ENCODE measurements at regions of chr17 and their contacts with region 1.

Region 1: DNA sequence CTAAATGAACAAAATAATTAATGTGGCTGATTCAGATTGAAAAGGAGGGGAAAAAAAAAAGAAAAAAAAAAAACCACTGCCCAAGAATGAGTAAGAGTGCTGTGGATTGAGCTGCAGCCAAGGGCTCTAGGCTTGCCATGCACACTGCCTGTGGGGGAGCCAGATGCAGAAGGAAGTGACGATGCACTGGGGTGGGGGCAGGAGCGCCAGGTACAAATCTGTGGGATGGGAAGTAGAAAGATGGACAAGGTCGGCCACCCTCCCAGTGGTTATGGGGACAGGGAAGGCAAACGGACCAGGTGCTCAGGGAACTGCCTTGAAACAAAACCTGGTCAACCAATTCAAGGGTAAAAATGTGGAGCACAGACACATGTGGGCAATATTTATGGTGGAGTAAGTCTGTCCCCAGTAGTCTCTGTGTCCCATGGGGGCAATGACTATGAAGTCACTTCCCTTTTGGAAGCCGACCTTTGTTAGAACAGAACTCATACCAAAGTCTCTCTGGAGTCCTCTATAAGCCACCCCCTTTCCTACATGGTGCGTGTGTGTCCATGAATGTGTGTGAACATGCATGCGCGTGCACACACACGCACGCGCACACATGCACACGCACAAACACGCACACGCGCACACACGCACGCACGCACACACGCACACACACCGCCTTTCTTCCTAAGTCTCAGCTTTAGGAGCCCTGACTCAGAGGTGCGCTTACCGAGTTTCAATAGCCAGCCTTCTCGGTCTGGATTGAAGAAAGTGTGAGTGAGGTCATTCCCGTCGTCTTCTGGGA is 84.3 kb downstream of the CYTH1 start:
- DNase-seq: no peak
- H3K4me3 ChIP-seq: no peak overlapping the region
- H3K27ac ChIP-seq: no peak overlapping the region
- H3K4me1 ChIP-seq: no peaks in the 10 kb centered on the region
- H3K27me3 ChIP-seq: no peaks in the 10 kb centered on the region
- CTCF ChIP-seq: no peak

Region 2: DNA sequence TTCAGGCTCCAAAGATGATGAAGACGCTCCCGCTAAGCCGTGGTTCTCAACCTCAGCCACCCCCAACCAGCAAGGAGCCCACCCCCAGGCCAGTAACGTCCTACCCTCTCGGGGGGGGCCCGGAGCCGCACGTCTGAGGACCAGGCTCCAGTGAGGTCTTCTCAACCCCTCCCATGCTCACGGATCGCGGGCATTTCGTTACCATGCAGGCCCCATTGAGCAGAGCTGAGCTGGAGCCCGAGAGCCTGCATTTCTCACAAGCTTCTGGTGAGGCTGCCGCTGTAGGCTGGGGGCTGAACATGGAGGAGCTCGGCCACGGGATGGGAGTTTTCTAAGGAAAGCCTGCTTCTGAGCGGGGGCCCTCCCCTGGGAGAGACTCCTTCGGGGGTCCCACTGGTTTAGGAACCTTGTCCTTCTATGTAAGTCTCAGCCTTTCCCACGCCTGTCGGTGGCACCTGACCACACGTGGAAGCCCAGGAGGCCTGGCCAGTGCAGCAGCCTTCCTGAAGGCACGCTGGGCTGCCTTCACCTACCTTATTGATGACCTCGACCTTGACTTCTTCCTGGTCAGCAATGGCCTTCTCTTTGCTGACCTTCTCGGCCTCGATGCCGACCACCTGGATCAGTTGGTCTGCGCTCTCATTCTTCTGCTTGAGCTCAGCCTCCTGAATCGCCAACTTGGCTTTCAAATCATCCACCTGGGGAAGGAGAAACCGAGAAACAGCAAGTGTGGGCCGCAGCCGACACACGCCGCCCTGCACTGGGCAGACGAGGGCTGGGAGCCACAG is 236.5 kb before region 1 on chr17:
- CTCF ChIA-PET with region 1: interaction called, 13 read pairs
- dilution Hi-C with region 1: no loop called
- in situ Hi-C with region 1: no loop called
- intact Hi-C with region 1: no loop called
- DNase-seq: no peak
- H3K4me3 ChIP-seq: no peak overlapping the region
- H3K27ac ChIP-seq: no peak overlapping the region
- H3K4me1 ChIP-seq: no peaks in the 10 kb centered on the region
- H3K27me3 ChIP-seq: no peaks in the 10 kb centered on the region
- CTCF ChIP-seq: no peak